Heart left ventricle (tissue), 16 donors: ENCODE measurements at regions of chr1 and their contacts with region 1.

Region 1: DNA sequence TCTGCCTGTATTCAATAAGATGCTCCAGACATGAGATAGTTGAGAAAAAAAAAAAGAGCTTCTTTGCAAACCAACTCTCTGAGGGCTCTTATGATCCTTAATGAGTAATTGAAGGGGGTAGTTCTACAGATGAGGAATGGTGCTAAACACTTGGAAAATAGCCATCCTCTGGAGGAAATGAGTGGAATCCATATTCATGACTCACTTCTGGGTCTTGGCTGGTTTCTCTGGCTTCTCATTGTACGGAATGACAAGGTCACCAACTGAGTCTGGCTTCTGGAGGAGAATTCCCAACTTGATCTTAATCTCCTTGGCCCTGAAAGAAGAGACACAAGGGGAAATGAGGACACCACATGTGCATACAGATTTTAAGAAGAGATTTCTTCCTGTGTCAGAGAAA is 34.7 kb downstream of the RGS5 start:
- DNase-seq: peak in 3 of 5 donors; percentile 25 to 35 (median 34)
- ATAC-seq: peak in 3 of 4 donors; percentile 81 to 88 (median 84)
- H3K4me3 ChIP-seq: no peak overlapping the region
- H3K27ac ChIP-seq: peak overlapping the region in 8 of 12 donors; percentile 35 to 73 (median 44)
- H3K4me1 ChIP-seq: peaks cover 0 to 63% (median 13%) of the 10 kb centered on the region in 12 donors
- H3K27me3 ChIP-seq: no peaks in the 10 kb centered on the region
- CTCF ChIP-seq: no peak
- POLR2A ChIP-seq: no peak

Region 2: DNA sequence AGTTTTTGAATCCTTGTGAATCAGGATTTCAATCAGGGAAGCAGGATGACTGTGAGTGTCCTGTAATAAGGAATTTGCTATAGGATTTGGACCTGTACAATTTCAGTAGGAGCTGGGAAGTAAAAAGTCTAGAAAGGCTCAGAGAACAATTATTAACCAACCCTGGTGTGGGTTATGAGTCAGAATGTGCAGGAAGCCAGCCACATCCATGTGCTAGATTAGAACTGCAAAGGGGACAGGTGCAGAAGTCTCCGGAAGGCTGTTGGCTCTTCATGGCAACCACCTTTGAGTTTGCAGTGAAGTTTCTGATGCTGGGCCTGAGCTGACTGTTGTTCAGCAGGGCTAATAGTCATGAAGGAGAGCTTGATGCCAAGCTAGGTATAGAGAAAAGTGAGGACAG is 862.1 kb before region 1 on chr1:
- intact Hi-C with region 1: no loop called
- DNase-seq: no peak
- ATAC-seq: no peak
- H3K4me3 ChIP-seq: no peak overlapping the region
- H3K27ac ChIP-seq: no peak overlapping the region
- H3K4me1 ChIP-seq: no peaks in the 10 kb centered on the region
- H3K27me3 ChIP-seq: no peaks in the 10 kb centered on the region
- CTCF ChIP-seq: no peak
- POLR2A ChIP-seq: no peak

Region 3: GRCh38 chr1:163054181-163054591 is 113.9 kb before region 1 on chr1:
- intact Hi-C with region 1: no loop called
- DNase-seq: no peak
- ATAC-seq: no peak
- H3K4me3 ChIP-seq: no peak overlapping the region
- H3K27ac ChIP-seq: no peak overlapping the region
- H3K4me1 ChIP-seq: no peaks in the 10 kb centered on the region
- H3K27me3 ChIP-seq: no peaks in the 10 kb centered on the region
- CTCF ChIP-seq: no peak
- POLR2A ChIP-seq: no peak

Region 4: DNA sequence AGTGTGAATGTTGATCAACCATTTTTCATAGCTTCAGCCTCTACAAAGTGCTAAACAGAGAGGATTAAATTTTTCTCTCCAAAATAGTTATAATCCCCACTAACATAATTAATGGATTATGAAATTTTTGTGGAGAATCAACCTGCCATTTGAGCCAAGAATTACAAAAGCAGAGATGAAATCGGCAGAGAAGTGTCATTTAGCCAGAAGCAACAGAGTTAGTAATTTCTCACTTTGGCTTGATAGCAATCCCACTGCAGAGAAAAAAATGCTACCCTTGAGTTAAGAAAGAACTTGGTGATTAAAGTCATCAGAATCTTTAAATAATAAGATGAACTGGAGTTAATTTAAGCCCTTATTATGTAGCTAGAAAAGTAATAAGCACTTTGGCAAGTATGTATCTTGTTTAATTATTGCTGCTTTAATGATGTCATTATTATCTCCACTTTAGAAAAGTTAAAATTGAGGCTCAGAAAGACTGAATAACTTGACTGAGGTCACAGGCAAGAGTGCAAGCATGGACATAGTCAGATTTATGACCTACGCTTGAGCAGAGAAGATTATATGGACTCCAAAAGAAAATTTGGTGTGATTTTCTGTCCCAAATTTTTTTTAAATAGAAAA is 61.6 kb before region 1 on chr1:
- intact Hi-C with region 1: loop called in 1 of 10 experiments (anchors 10 kb)
- DNase-seq: no peak
- ATAC-seq: peak in 1 of 4 donors; percentile 45
- H3K4me3 ChIP-seq: no peak overlapping the region
- H3K27ac ChIP-seq: peak overlapping the region in 4 of 12 donors; percentile 1 to 60 (median 26)
- H3K4me1 ChIP-seq: peaks cover 0 to 14% (median 0%) of the 10 kb centered on the region in 12 donors
- H3K27me3 ChIP-seq: no peaks in the 10 kb centered on the region
- CTCF ChIP-seq: no peak
- POLR2A ChIP-seq: no peak

Region 5: DNA sequence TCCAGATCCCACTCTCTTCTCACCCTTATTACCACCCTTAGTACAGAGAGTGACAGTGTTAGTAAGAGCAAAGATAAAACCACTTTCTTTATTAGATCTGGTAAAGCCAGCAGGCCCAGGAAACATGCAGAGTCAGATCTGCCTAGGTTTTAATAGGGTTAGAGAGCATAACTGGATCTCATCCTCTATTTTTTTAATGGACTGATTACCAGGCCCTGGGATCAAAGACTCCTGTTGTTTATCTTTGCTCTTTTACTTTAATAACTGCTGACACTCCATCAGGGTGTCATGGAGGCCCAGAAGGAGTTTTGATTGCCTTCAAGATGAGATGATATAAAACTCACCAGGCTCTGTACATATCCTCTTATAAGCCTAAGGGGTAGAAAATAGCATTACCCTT is 80.0 kb after region 1 on chr1:
- intact Hi-C with region 1: no loop called
- DNase-seq: no peak
- ATAC-seq: no peak
- H3K4me3 ChIP-seq: no peak overlapping the region
- H3K27ac ChIP-seq: peak overlapping the region in 1 of 12 donors; percentile 25
- H3K4me1 ChIP-seq: no peaks in the 10 kb centered on the region
- H3K27me3 ChIP-seq: no peaks in the 10 kb centered on the region
- CTCF ChIP-seq: no peak
- POLR2A ChIP-seq: no peak

Region 6: DNA sequence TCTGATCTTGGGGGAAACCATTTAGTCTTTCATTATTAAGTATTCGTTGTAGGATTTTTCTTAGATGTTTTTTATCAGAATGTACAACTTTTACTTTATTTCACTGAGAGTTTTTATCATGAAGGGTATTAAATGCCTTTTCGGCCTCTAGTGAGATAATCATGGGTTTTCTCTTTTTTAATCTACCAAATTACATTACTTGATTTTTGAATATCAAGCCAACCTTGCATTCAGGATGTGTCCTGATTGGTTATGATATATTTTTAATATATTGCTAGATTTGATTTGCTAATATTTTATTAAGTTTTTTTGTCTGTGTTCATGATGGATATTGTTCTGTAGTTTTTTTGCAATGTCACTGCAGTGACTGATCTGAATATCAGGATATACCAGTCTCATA is 163.1 kb after region 1 on chr1:
- intact Hi-C with region 1: no loop called
- DNase-seq: no peak
- ATAC-seq: no peak
- H3K4me3 ChIP-seq: no peak overlapping the region
- H3K27ac ChIP-seq: no peak overlapping the region
- H3K4me1 ChIP-seq: no peaks in the 10 kb centered on the region
- H3K27me3 ChIP-seq: no peaks in the 10 kb centered on the region
- CTCF ChIP-seq: no peak
- POLR2A ChIP-seq: no peak